Calu3 (cell line): ENCODE measurements at regions of chr3 and their contacts with region 1.

Region 1: GRCh38 chr3:133812872-133813271 is 7.3 kb downstream of the SRPRB start:
- DNase-seq: no peak
- H3K4me3 Mint-ChIP-seq: no peak overlapping the region
- H3K27ac Mint-ChIP-seq: no peak overlapping the region
- H3K4me1 Mint-ChIP-seq: no peaks in the 10 kb centered on the region
- H3K27me3 Mint-ChIP-seq: no peaks in the 10 kb centered on the region
- CTCF ChIP-seq: no peak

Region 2: DNA sequence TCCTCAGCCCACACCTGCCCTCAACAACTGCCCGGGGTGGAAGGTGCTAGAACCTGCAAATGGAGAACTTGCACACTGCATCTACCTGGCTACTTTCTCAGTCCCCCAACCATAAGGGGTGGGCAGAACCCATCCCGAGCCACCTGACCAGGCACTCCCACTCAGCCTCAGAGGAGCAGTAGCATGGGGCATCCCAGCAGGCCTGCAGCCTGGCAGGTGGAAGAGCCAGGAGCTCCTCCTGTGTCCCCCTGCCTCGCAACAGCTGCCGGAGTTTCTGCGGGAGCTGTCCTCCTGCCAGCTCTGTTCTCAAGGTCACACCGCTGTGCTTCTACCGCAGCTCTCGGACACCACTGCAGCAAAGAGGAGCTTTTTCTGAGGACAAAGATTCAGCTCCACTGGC is 55.3 kb after region 1 on chr3:
- CTCF ChIA-PET with region 1: no interaction called
- intact Hi-C with region 1: no loop called
- DNase-seq: no peak
- H3K4me3 Mint-ChIP-seq: no peak overlapping the region
- H3K27ac Mint-ChIP-seq: no peak overlapping the region
- H3K4me1 Mint-ChIP-seq: no peaks in the 10 kb centered on the region
- H3K27me3 Mint-ChIP-seq: peaks cover 93% of the 10 kb centered on the region
- CTCF ChIP-seq: no peak

Region 3: GRCh38 chr3:133915685-133916658 is 103.1 kb after region 1 on chr3:
- CTCF ChIA-PET with region 1: no interaction called
- intact Hi-C with region 1: no loop called
- DNase-seq: no peak
- H3K4me3 Mint-ChIP-seq: no peak overlapping the region
- H3K27ac Mint-ChIP-seq: no peak overlapping the region
- H3K4me1 Mint-ChIP-seq: no peaks in the 10 kb centered on the region
- H3K27me3 Mint-ChIP-seq: peaks cover 57% of the 10 kb centered on the region
- CTCF ChIP-seq: no peak

Region 4: GRCh38 chr3:134186391-134186790 is 373.5 kb after region 1 on chr3:
- CTCF ChIA-PET with region 1: no interaction called
- intact Hi-C with region 1: loop called (anchors 10 kb)
- DNase-seq: no peak
- H3K4me3 Mint-ChIP-seq: no peak overlapping the region
- H3K27ac Mint-ChIP-seq: no peak overlapping the region
- H3K4me1 Mint-ChIP-seq: no peaks in the 10 kb centered on the region
- H3K27me3 Mint-ChIP-seq: no peaks in the 10 kb centered on the region
- CTCF ChIP-seq: no peak